ENCODE measurements at regions of chr3 and their contacts with region 1.

Region 1: DNA sequence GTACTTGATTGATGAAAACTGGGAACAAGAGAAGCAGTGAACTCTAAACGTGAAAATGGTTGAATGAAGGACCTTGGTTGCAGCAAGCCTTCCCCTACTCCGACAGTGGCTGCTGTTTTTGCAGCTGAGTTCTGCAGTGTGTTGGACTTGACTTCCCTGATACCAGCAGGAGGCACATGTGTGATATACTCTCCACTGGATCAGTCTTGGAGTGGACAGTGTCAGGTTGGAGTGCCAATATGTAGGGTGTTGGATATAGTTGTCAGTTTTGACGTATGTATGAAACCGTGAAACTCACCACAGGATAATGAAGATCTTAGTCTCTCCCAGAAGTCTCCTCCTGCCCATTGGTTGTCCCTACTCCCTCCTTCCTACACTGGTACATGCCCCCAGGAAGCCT is 106.5 kb downstream of the ITPR1 start:
- DNase-seq: no peak
- ATAC-seq: no peak
- H3K4me3 ChIP-seq: no peak overlapping the region
- H3K4me3 Mint-ChIP-seq: no peak overlapping the region
- H3K27ac ChIP-seq: no peak overlapping the region
- H3K27ac Mint-ChIP-seq: no peak overlapping the region
- H3K4me1 ChIP-seq: no peaks in the 10 kb centered on the region
- H3K4me1 Mint-ChIP-seq: peaks cover 0 to 63% (median 39%) of the 10 kb centered on the region in 7 donors
- H3K27me3 ChIP-seq: no peaks in the 10 kb centered on the region
- H3K27me3 Mint-ChIP-seq: no peaks in the 10 kb centered on the region

Region 2: DNA sequence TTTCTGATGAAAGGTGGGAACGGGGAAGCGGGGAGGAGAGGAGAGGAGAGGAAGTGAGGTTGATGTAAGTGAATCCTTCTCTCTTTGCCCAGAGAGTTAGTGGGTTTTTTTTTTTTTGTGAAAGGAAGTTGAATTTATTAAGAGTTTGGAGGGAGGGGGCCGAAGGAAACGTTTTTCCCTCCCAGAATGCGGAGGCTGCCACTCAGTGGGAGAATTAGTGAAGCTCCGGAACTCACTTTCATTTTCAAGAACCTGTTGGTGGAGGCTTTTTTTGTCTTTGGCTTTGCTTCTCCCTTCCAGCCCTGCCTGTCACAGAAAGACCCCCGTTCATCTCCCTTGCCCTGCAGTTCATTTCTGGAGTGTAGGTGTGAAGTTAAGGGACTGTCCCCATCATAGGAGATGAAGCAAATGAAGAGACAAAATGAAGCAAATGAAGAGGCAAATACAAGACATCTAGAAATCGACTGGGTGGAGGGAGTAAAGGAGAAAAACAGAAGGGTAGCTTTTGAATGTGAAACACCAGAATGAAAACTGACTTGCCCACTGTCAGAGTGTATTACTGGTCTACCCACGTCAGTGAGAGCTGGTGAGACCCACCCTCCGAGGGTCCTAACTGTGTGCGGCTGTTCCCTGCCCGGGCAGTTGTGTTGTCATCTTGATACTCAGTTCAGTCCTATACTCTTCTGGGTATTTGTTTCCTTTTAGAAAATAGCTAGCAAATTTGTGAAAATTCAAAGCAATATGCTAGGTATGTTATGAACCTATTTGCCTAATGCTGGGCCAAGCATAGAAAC is 15.0 kb before region 1 on chr3:
- CTCF ChIA-PET with region 1: no interaction called
- POLR2A ChIA-PET with region 1: interaction called, 4 read pairs
- intact Hi-C with region 1: loop called in 1 of 2 experiments (anchors 2 kb)
- DNase-seq: peak in 6 of 9 donors; percentile 6 to 36 (median 26)
- ATAC-seq: peak; percentile 49
- H3K4me3 ChIP-seq: peak overlapping the region; percentile 38
- H3K4me3 Mint-ChIP-seq: peak overlapping the region; percentile 73 to 91 (median 86)
- H3K27ac ChIP-seq: peak overlapping the region; percentile 40
- H3K27ac Mint-ChIP-seq: peak overlapping the region; percentile 77 to 96 (median 85)
- H3K4me1 ChIP-seq: peaks cover 35 to 38% of the 10 kb centered on the region in 2 donors
- H3K4me1 Mint-ChIP-seq: peaks cover 29 to 90% (median 79%) of the 10 kb centered on the region in 7 donors
- H3K27me3 ChIP-seq: no peaks in the 10 kb centered on the region
- H3K27me3 Mint-ChIP-seq: no peaks in the 10 kb centered on the region